ENCODE measurements at regions of chr1 and their contacts with region 1.

Region 1: DNA sequence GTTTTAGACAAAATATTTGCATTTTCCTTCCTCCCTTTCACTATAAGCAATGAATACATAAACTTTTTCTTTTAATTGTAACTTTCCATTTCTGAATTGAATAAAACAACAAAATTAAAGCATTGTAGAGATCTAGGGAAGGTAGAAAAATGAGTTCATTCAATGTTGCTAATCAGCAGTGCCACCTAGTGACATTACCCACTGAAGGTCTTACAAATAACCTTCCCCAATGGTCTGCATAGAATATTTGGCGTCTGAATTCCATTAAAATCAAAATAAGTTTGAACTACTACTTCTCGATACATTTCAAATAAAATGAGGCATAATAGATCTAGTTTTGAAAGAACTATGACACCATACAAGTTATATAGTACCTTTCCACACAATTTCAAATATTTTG is 19.6 kb downstream of the FH start:
- DNase-seq: no peak
- ATAC-seq: no peak
- H3K4me3 ChIP-seq: no peak overlapping the region
- H3K4me3 Mint-ChIP-seq: no peak overlapping the region
- H3K27ac ChIP-seq: no peak overlapping the region
- H3K27ac Mint-ChIP-seq: no peak overlapping the region
- H3K4me1 ChIP-seq: no peaks in the 10 kb centered on the region
- H3K4me1 Mint-ChIP-seq: peaks cover 0 to 9% (median 0%) of the 10 kb centered on the region in 7 donors
- H3K27me3 ChIP-seq: no peaks in the 10 kb centered on the region
- H3K27me3 Mint-ChIP-seq: no peaks in the 10 kb centered on the region

Region 2: DNA sequence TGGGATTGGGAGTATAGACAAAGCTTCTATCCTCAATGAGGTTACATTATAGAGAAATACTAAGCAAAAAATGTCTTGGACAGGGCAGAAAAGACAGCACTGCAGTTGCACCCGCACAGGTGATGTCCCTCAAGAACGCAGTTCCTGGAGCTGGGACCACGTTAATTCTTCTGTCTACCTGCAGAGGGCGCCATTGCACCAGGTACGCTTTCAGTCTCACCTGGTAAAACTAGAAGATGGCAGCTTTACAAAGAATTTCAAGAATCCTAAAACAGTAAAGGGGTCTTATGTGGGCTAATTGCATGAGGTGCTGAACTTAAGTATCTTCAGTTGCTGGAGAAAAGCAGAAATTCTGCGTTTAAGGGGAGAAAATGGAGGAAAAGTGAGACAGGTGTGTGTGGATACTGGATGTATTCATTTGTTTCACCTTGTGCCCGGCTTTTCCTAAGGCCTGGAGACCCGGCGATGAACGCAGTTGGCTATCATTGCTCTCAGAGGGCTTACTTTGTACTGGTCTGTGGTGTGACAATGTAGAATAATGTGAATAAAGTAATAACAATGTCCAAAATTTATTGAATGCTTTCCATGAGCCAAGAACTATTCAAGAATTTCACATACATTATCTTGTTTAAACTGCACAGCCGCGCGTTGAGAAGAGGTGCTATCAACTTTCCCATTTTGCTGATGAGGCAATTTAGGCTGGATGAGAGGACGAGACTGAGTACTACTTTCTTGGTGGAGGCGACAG is 611.7 kb before region 1 on chr1:
- CTCF ChIA-PET with region 1: no interaction called
- POLR2A ChIA-PET with region 1: no interaction called
- intact Hi-C with region 1: loop called in 1 of 2 experiments (anchors 10 kb)
- DNase-seq: peak in 1 of 9 donors; percentile 21
- ATAC-seq: no peak
- H3K4me3 ChIP-seq: no peak overlapping the region
- H3K4me3 Mint-ChIP-seq: no peak overlapping the region
- H3K27ac ChIP-seq: no peak overlapping the region
- H3K27ac Mint-ChIP-seq: no peak overlapping the region
- H3K4me1 ChIP-seq: no peaks in the 10 kb centered on the region
- H3K4me1 Mint-ChIP-seq: peaks cover 0 to 2% (median 0%) of the 10 kb centered on the region in 7 donors
- H3K27me3 ChIP-seq: no peaks in the 10 kb centered on the region
- H3K27me3 Mint-ChIP-seq: no peaks in the 10 kb centered on the region

Region 3: GRCh38 chr1:241311056-241311746 is 188.7 kb before region 1 on chr1:
- CTCF ChIA-PET with region 1: no interaction called
- POLR2A ChIA-PET with region 1: no interaction called
- intact Hi-C with region 1: no loop called
- DNase-seq: no peak
- ATAC-seq: no peak
- H3K4me3 ChIP-seq: no peak overlapping the region
- H3K4me3 Mint-ChIP-seq: no peak overlapping the region
- H3K27ac ChIP-seq: no peak overlapping the region
- H3K27ac Mint-ChIP-seq: no peak overlapping the region
- H3K4me1 ChIP-seq: no peaks in the 10 kb centered on the region
- H3K4me1 Mint-ChIP-seq: no peaks in the 10 kb centered on the region
- H3K27me3 ChIP-seq: no peaks in the 10 kb centered on the region
- H3K27me3 Mint-ChIP-seq: no peaks in the 10 kb centered on the region

Region 4: DNA sequence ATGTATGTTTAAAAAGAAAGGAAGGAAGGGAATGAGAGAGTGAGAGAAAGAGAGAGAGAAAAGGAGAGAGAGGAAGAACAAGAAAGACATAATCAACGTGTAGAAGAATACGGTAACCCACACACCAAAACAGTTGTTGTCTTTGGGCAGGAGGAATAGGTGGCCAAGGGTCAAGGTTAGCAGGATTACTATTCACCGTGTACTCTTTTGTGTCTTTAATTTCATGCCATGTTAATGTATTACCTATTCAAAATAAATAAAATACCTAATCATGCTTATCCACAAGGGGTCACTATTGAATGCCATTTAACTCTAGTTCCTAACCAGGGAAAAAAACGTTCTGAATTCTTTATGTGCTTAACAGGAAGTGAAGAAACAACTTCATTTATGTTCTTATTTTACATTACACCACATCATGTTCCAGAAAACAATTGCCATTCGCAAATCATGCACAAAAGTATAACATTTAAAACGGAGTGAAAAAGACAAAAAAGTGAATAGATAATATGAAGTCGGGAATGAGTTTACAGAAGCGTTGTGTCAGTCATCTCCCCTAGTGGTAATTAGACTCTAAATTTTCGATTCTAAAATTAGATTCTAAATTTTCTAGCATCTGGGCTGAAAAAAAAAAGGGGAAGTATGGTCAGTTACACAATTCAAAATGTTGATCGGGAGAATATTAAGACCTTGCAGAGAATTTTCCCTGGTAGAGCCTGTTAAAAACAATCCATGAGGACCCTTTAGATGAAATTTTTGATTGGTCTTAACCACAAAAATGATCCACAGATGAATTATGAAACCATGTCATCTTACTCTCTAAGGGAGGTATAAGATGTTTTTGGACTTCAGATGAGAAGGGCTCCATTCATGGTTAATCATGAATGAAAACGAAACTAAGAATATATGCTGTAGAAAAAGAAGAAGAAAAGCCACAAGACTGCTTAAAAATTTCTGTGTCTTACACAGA is 31.6 kb after region 1 on chr1:
- CTCF ChIA-PET with region 1: no interaction called
- POLR2A ChIA-PET with region 1: no interaction called
- intact Hi-C with region 1: no loop called
- DNase-seq: peak in 7 of 9 donors; percentile 34 to 77 (median 67)
- ATAC-seq: peak; percentile 92
- H3K4me3 ChIP-seq: peak overlapping the region; percentile 71
- H3K4me3 Mint-ChIP-seq: peak overlapping the region; percentile 86 to 99 (median 92)
- H3K27ac ChIP-seq: peak overlapping the region; percentile 54
- H3K27ac Mint-ChIP-seq: peak overlapping the region; percentile 49 to 93 (median 83)
- H3K4me1 ChIP-seq: peaks cover 4 to 6% of the 10 kb centered on the region in 2 donors
- H3K4me1 Mint-ChIP-seq: peaks cover 8 to 16% (median 13%) of the 10 kb centered on the region in 7 donors
- H3K27me3 ChIP-seq: no peaks in the 10 kb centered on the region
- H3K27me3 Mint-ChIP-seq: peaks cover 0 to 37% (median 0%) of the 10 kb centered on the region in 5 donors

Region 5: GRCh38 chr1:241870290-241870689 is 370.4 kb after region 1 on chr1:
- CTCF ChIA-PET with region 1: no interaction called
- POLR2A ChIA-PET with region 1: no interaction called
- intact Hi-C with region 1: no loop called
- DNase-seq: no peak
- ATAC-seq: no peak
- H3K4me3 ChIP-seq: no peak overlapping the region
- H3K4me3 Mint-ChIP-seq: no peak overlapping the region
- H3K27ac ChIP-seq: no peak overlapping the region
- H3K27ac Mint-ChIP-seq: no peak overlapping the region
- H3K4me1 ChIP-seq: no peaks in the 10 kb centered on the region
- H3K4me1 Mint-ChIP-seq: peaks cover 0 to 7% (median 0%) of the 10 kb centered on the region in 7 donors
- H3K27me3 ChIP-seq: no peaks in the 10 kb centered on the region
- H3K27me3 Mint-ChIP-seq: no peaks in the 10 kb centered on the region